CD8-positive, alpha-beta T cell (primary cell): ENCODE measurements at regions of chr7 and their contacts with region 1.

Region 1: DNA sequence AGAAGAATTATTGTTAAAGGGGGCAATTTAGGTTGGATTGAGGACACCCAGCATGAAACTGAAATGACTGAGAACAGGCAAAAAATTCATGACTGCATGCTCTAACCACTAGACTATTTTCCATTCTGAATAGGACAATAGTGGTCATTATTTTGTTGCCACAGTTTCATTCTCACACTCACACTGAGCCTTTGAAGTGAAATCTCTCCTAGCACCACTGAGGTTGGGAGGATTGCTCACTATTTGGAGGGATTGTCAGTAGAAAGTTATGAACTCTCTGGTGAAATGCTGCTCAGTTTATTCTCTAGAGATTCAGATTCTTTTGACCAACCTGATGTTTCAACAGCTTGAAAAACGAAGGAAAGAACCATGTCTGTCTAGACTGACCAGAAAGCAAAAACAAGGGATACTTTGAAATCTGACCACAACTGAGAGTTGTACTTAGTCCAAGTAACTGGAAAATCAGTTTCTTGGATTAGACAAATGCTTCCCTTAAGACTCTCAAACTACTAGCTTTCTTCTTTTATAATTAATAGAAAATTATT is 191.2 kb downstream of the DYNC1I1 start:
- DNase-seq: no peak
- ATAC-seq: no peak
- H3K4me3 ChIP-seq: no peak overlapping the region
- H3K4me3 Mint-ChIP-seq: no peak overlapping the region
- H3K27ac ChIP-seq: no peak overlapping the region
- H3K27ac Mint-ChIP-seq: no peak overlapping the region
- H3K4me1 ChIP-seq: no peaks in the 10 kb centered on the region
- H3K4me1 Mint-ChIP-seq: no peaks in the 10 kb centered on the region
- H3K27me3 ChIP-seq: no peaks in the 10 kb centered on the region
- H3K27me3 Mint-ChIP-seq: peaks cover 4% of the 10 kb centered on the region
- CTCF ChIP-seq: no peak

Region 2: DNA sequence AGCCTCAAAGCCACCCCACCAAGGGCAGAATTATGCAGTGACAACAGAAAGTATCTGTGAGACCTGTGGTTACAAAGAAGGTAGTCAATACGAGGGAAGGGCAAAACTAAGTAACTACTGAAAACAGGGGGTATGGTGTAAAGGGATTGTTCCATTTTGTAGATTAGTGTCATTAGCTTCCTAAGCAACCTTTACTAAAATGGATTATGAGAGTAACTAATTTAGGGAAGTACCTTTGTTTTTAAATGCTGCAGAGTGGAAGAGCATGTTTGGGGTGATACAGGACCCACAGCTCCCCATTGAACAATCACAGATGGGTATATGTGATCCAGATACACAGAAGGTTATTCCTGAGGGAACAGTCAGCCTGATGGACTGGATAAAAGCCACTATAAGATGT is 1717.1 kb after region 1 on chr7:
- CTCF ChIA-PET with region 1: no interaction called
- POLR2A ChIA-PET with region 1: no interaction called
- intact Hi-C with region 1: loop called in 1 of 2 experiments (anchors 10 kb)
- DNase-seq: no peak
- ATAC-seq: no peak
- H3K4me3 ChIP-seq: no peak overlapping the region
- H3K4me3 Mint-ChIP-seq: no peak overlapping the region
- H3K27ac ChIP-seq: no peak overlapping the region
- H3K27ac Mint-ChIP-seq: no peak overlapping the region
- H3K4me1 ChIP-seq: no peaks in the 10 kb centered on the region
- H3K4me1 Mint-ChIP-seq: no peaks in the 10 kb centered on the region
- H3K27me3 ChIP-seq: no peaks in the 10 kb centered on the region
- H3K27me3 Mint-ChIP-seq: peaks cover 2% of the 10 kb centered on the region
- CTCF ChIP-seq: no peak